Breast epithelium (tissue), 4 donors: ENCODE measurements at regions of chr15 and their contacts with region 1.

Region 1: DNA sequence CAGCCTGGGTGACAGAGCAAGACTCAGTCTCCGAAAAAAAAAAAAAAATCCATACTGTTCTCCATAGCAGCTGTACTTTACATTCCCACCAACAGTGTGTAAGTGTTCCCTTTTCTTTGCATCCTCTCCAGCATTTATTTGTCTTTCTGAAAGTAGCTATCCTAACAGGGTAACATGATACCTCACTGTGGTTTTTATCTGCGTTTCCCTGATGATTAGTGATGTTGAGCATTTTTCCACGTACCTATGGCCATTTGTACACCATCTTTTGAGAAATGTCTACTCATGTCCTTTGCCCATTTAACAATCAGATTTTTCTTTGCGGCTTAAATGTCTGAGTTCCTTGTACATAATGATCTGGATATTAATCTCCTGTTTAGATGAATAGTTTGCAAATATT is 119.3 kb downstream of the RFX7 start:
- DNase-seq: no peak
- H3K4me3 ChIP-seq: no peak overlapping the region
- H3K27ac ChIP-seq: no peak overlapping the region
- H3K4me1 ChIP-seq: no peaks in the 10 kb centered on the region
- H3K27me3 ChIP-seq: no peaks in the 10 kb centered on the region
- CTCF ChIP-seq: no peak
- POLR2A ChIP-seq: no peak

Region 2: GRCh38 chr15:55791576-55792400 is 332.6 kb before region 1 on chr15:
- intact Hi-C with region 1: loop called (anchors 5 kb)
- DNase-seq: no peak
- H3K4me3 ChIP-seq: no peak overlapping the region
- H3K27ac ChIP-seq: no peak overlapping the region
- H3K4me1 ChIP-seq: no peaks in the 10 kb centered on the region
- H3K27me3 ChIP-seq: no peaks in the 10 kb centered on the region
- CTCF ChIP-seq: no peak
- POLR2A ChIP-seq: no peak

Region 3: GRCh38 chr15:55993111-55993803 is 131.1 kb before region 1 on chr15 and contains the start of gene NEDD4:
- intact Hi-C with region 1: no loop called
- DNase-seq: peak; percentile 70 to 82
- H3K4me3 ChIP-seq: peak within 1 kb of the TSS; percentile 80 to 96 (median 89)
- H3K27ac ChIP-seq: peak within 1 kb of the TSS; percentile 95 to 97
- H3K4me1 ChIP-seq: no peaks in the 10 kb centered on the region
- H3K27me3 ChIP-seq: no peaks in the 10 kb centered on the region
- CTCF ChIP-seq: no peak
- POLR2A ChIP-seq: no peak
- total RNA-seq, gene NEDD4: 13.0 to 19.6 (median 19.3) TPM

Region 4: GRCh38 chr15:56098195-56098863 is 26.1 kb before region 1 on chr15:
- intact Hi-C with region 1: no loop called
- DNase-seq: no peak
- H3K4me3 ChIP-seq: no peak overlapping the region
- H3K27ac ChIP-seq: no peak overlapping the region
- H3K4me1 ChIP-seq: no peaks in the 10 kb centered on the region
- H3K27me3 ChIP-seq: no peaks in the 10 kb centered on the region
- CTCF ChIP-seq: no peak
- POLR2A ChIP-seq: no peak

Region 5: DNA sequence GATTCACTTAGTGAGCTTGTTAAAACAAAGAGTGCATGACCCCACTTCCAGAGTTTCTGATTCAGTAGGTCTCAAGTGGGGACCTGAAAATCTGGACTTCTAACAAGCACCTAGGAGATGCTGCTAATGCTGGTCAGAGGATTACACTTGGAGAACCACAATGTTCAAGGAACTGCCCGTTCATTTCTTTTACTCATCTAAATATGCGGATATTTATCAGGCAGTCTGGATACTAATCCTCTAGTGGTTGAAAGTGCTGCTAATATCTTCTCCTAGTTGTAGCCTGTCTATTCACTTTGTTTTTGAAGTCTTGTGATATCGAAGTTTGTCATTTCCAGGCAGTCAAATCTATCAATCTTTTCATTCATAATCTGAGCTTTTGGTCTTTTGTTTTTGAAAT is 32.5 kb after region 1 on chr15:
- intact Hi-C with region 1: loop called (anchors 2 kb)
- DNase-seq: no peak
- H3K4me3 ChIP-seq: no peak overlapping the region
- H3K27ac ChIP-seq: no peak overlapping the region
- H3K4me1 ChIP-seq: no peaks in the 10 kb centered on the region
- H3K27me3 ChIP-seq: no peaks in the 10 kb centered on the region
- CTCF ChIP-seq: no peak
- POLR2A ChIP-seq: no peak

Region 6: GRCh38 chr15:56719774-56720555 is 595.6 kb after region 1 on chr15:
- intact Hi-C with region 1: no loop called
- DNase-seq: no peak
- H3K4me3 ChIP-seq: no peak overlapping the region
- H3K27ac ChIP-seq: no peak overlapping the region
- H3K4me1 ChIP-seq: no peaks in the 10 kb centered on the region
- H3K27me3 ChIP-seq: no peaks in the 10 kb centered on the region
- CTCF ChIP-seq: no peak
- POLR2A ChIP-seq: no peak